ENCODE measurements at regions of chr17 and their contacts with region 1.

Region 1: GRCh38 chr17:49280061-49280460 is 49.5 kb upstream of the PHOSPHO1 start:
- DNase-seq: no peak
- H3K4me3 ChIP-seq: no peak overlapping the region
- H3K27ac ChIP-seq: no peak overlapping the region
- H3K4me1 ChIP-seq: no peaks in the 10 kb centered on the region
- H3K27me3 ChIP-seq: no peaks in the 10 kb centered on the region
- CTCF ChIP-seq: no peak
- EP300 ChIP-seq: no peak
- POLR2A ChIP-seq: no peak

Region 2: GRCh38 chr17:49180303-49180702 is 99.8 kb before region 1 on chr17:
- intact Hi-C with region 1: loop called (anchors 10 kb)
- DNase-seq: no peak
- H3K4me3 ChIP-seq: no peak overlapping the region
- H3K27ac ChIP-seq: no peak overlapping the region
- H3K4me1 ChIP-seq: no peaks in the 10 kb centered on the region
- H3K27me3 ChIP-seq: peaks cover 0 to 11% (median 0%) of the 10 kb centered on the region in 4 donors
- CTCF ChIP-seq: peak; percentile 60 to 74 (median 60)
- EP300 ChIP-seq: no peak
- POLR2A ChIP-seq: no peak

Region 3: DNA sequence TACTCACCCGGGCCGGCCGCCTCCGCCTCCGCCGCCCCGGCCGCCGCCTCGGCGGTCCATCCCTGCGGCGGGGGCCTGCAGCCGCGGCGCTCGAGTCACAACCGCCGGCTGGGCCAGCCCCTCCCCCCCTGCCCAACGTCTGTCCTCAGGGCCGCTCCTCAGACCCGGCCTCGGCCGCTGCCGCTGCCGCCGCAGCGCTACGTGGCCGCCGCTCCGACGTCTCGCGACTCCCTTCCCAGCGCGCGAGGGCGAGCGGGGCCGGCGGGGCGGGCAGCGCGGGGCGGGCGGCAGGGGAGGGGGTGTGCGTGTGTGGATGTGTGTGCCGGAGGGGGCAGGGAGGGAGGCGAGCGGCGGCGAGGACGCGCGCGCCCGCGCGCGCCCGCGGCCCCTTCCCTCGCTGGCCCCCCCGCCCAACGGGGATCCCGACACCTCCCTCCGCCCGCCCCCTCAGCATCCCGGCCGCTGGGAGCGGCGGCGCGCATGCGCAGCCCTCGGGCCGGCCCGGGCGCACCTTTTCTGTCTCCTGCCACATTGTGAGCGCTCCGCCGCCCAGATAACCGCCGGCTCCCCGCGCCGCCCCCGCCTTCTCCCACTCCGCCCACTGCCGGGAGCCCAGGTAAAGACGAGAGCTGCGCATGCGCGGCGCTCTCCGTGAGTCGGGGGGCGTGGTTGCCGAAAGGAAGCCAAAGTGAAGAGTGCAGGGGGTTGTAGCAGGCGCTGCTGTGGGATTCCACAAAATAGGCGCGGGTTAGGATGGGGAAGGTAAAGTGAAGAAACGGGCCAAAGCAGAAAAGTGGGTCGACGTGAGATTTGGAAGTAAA is 82.1 kb after region 1 on chr17 and contains the start of gene ZNF652:
- intact Hi-C with region 1: no loop called
- DNase-seq: peak; percentile 95
- H3K4me3 ChIP-seq: peak within 1 kb of the TSS; percentile 86 to 100 (median 96)
- H3K27ac ChIP-seq: peak within 1 kb of the TSS; percentile 94 to 95 (median 95)
- H3K4me1 ChIP-seq: peaks cover 14 to 54% (median 48%) of the 10 kb centered on the region in 4 donors
- H3K27me3 ChIP-seq: no peaks in the 10 kb centered on the region
- CTCF ChIP-seq: no peak
- EP300 ChIP-seq: no peak
- POLR2A ChIP-seq: no peak
- total RNA-seq, gene ZNF652: 59.3 to 100.0 (median 83.0) TPM